A549 (cell line): ENCODE measurements at regions of chr10 and their contacts with region 1.

Region 1: DNA sequence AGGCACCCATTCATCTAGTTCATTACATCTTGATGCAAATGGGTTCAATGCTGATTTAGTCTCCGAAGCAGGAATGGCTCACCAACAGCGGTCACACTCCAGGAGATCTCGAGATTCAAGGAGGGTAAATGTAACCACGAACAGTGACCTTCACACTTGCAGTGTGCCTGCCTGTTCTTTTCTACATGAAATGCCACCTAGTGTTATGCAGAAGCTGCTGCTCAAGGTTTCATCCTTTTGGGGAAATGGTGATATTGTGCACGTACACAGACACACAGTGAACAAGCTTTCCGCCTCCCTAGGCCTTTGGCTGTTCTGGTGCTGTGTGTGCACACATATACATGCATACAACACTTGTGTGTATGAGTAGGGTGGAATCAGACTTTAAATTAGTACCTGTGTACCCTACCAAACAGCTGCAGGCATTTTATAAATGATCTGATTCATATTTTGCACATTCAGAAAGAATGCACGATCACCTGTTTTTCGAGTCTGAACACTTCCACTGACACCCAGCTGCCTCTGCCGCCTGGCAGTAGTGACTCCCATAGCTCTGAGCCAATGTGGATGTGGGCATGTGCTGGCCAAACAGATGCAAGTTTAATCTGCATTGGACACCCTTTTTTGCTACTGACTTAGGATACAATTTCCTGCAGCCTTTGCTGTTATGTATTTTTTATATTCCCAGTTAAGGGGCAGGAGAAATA is 100.5 kb downstream of the TACC2 start:
- DNase-seq: peak in 1 of 2 experiments; percentile 34
- ATAC-seq: peak in 1 of 2 experiments; percentile 68; a peak in 3 of 6 replicates
- H3K4me3 ChIP-seq: no peak overlapping the region
- H3K27ac ChIP-seq: peak overlapping the region in 1 of 2 experiments; percentile 62; a peak in 3 of 6 replicates
- H3K4me1 ChIP-seq: 0 out of 3 replicates have a peak, but pooled peaks cover 3% of the 10 kb centered on the region
- CTCF ChIP-seq: no peak
- EP300 ChIP-seq: no peak
- POLR2A ChIP-seq: no peak
- RAD21 ChIP-seq: peak in 1 of 2 experiments; percentile 33; a peak in 2 of 5 replicates

Region 2: DNA sequence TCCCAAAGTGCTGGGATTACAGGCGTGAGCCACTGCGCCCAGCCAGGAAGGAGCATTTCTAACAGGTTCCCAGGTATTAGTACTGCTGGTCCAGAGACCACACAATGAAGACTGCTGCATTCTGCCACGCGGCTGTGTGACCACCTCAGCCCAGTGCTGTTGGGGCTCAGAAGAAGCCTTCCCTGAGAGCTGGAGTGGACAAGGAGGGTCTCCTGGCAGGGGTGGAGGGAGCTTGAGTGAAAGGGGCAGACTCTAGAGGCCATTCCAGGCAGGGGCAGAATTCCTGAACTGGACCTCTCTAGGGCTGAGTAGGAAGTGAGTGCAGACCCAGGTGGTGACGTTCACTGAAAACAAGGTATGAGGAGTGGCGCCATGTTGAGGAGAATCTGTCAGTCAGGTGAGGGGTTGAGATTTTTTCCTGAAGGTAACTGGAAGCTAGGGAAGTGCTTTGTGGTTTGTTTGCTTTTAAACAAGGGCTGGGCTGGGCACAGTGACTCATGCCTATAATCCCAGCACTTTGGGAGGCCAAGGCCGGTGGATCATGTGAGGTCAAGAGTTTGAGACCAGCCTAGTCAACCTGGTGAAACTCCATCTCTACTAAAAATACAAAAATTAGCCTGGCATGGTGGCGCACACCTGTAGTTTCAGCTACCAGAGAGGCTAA is 32.9 kb before region 1 on chr10:
- CTCF ChIA-PET with region 1: interaction called, 10 read pairs
- POLR2A ChIA-PET with region 1: no interaction called
- DNase-seq: peak in 1 of 2 experiments; percentile 89
- ATAC-seq: peak; percentile 37 to 43; a peak in 5 of 6 replicates
- H3K4me3 ChIP-seq: no peak overlapping the region
- H3K27ac ChIP-seq: peak overlapping the region; percentile 82
- H3K4me1 ChIP-seq: peaks cover 47% of the 10 kb centered on the region
- CTCF ChIP-seq: no peak
- EP300 ChIP-seq: no peak
- POLR2A ChIP-seq: no peak
- RAD21 ChIP-seq: no peak

Region 3: DNA sequence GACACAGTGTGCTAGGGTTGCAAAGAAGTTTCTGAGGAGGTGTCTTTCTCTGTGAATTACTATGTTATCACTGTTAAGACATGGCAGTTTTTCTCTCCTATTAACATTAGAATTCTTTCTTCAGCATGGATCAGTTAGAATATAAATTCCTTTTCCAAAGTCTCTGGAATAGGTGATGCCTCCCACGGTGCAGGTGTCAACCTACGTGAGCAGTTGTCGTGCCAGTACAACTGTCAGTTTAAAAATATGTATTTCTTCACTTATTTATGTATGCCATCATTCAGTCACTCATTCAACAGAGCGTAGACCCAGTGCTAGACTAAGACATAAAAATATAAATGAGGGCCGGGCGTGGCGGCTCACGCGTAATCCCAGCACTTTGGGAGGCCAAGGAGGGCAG is 17.0 kb before region 1 on chr10:
- CTCF ChIA-PET with region 1: interaction called, 11 read pairs
- POLR2A ChIA-PET with region 1: no interaction called
- DNase-seq: no peak
- ATAC-seq: no peak
- H3K4me3 ChIP-seq: no peak overlapping the region
- H3K27ac ChIP-seq: peak overlapping the region; percentile 93 to 94; a peak in 5 of 6 replicates
- H3K4me1 ChIP-seq: peaks cover 46% of the 10 kb centered on the region
- CTCF ChIP-seq: no peak
- EP300 ChIP-seq: no peak
- POLR2A ChIP-seq: no peak
- RAD21 ChIP-seq: no peak

Region 4: DNA sequence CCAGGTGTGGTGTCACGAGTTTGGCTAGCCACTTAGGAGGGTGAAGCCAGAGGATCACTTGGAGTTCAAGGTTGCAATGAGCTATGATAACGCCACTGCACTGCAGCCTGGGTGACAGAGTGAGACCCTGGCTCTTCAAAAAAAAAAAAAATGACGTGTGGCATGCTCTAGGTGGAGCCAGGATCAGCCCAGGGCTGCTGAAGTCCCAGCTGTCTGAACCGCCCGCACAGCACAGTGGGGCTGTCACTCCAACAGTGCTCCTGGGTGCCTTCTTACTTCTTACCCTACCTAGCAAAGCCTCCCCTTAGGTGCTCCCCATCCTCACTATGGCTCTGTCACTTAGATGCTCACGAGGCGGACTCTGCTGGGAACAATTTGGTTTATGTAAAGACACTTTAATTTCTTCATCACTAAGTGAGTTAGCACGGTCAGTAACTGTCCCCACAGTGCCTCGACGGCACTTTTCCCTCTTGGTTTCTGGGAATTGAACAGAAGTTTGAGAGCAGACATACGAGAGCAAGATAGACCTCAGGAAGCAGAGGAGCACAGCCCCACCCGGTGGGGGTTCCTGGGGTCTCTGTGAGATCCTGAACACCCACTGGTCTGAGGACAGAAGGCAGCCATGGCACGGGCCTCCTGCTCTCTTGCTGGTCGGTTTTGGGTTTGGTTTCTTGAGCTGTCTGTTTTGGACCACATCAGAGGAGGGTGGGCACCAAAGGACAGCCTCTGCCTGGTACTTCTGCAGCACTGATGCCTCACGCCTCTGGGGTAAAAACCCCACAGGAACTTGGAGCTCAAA is 115.4 kb after region 1 on chr10:
- CTCF ChIA-PET with region 1: no interaction called
- POLR2A ChIA-PET with region 1: no interaction called
- DNase-seq: no peak
- ATAC-seq: peak in 1 of 2 experiments; percentile 55; a peak in 3 of 6 replicates
- H3K4me3 ChIP-seq: no peak overlapping the region
- H3K27ac ChIP-seq: no peak overlapping the region
- H3K4me1 ChIP-seq: peaks cover 21% of the 10 kb centered on the region
- CTCF ChIP-seq: no peak
- EP300 ChIP-seq: no peak
- POLR2A ChIP-seq: no peak
- RAD21 ChIP-seq: no peak